ENCODE measurements at regions of chr6 and their contacts with region 1.

Region 1: DNA sequence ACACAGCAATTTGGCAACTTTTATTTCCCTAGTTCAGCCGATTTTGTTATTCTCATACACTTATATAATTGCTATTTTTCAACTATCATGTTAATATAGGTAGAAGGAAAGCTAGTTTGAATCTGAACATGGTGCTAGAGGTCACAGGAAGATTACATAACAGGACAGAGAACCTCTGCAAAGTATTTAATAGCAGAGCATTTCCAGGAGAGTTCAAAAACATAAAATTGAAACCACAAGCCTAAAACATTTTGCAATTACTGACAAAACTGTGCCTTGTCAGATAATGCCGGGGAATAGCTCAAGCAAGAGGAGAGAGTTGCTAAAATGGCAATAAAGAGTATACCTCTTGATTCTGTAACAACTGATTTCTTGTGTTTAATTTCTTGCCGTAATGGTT is 70.8 kb downstream of the TFAP2B start:
- DNase-seq: no peak
- H3K4me3 ChIP-seq: no peak overlapping the region
- H3K27ac ChIP-seq: no peak overlapping the region
- H3K4me1 ChIP-seq: no peaks in the 10 kb centered on the region
- H3K27me3 ChIP-seq: no peaks in the 10 kb centered on the region
- CTCF ChIP-seq: no peak
- EP300 ChIP-seq: no peak
- POLR2A ChIP-seq: no peak

Region 2: DNA sequence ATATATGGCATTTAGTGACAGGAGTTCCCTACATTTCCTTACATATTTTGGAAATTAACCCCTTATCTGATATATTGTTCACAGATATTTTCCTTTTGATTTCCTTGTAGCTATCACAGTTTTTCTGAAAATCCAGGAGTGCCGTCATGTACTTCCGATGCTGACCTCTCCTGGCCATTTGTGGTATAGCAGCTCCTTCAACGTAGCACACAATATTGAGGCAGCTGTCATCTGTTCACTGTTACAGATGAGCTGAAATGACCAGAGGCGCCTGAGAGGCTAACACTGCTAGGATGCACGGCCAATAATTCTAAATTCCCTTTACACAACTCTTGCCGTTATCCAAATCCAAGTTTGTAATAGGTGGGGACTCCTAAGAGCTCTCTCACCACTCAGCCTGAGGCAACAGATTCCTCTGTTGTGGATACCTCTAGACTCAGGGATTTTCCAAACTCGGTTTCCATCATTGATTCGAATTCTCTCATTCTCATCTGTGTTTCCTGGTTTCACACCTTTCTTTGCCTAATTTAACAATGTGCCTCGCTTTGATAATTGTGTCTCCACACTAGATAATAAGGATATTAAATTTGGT is 1479.5 kb before region 1 on chr6:
- intact Hi-C with region 1: no loop called
- DNase-seq: peak; percentile 12 to 51 (median 30)
- H3K4me3 ChIP-seq: no peak overlapping the region
- H3K27ac ChIP-seq: no peak overlapping the region
- H3K4me1 ChIP-seq: no peaks in the 10 kb centered on the region
- H3K27me3 ChIP-seq: no peaks in the 10 kb centered on the region
- CTCF ChIP-seq: peak in 2 of 3 donors; percentile 24 to 31
- EP300 ChIP-seq: no peak
- POLR2A ChIP-seq: no peak

Region 3: DNA sequence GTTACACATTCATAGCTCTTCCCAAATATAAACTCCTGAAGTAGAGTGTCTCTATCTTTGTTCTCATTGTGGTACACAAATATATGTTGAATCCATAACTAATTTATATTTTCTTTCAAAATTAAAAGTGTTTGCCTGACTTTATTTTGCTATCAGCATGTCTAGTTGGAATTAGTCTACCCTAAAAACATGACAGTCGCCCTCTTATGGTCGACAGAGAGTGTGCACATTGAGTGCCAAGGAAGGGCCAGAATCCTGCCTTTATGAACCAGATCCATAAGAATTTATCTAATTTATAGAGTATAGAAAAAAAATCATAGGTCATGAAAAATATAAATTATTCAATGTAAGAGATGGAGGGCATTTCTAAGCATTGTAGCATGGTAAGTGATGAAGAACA is 827.4 kb before region 1 on chr6:
- intact Hi-C with region 1: loop called in 1 of 4 experiments (anchors 10 kb)
- DNase-seq: no peak
- H3K4me3 ChIP-seq: no peak overlapping the region
- H3K27ac ChIP-seq: no peak overlapping the region
- H3K4me1 ChIP-seq: no peaks in the 10 kb centered on the region
- H3K27me3 ChIP-seq: no peaks in the 10 kb centered on the region
- CTCF ChIP-seq: no peak
- EP300 ChIP-seq: no peak
- POLR2A ChIP-seq: no peak